PC-9 (cell line): ENCODE measurements at regions of chr3 and their contacts with region 1.

Region 1: GRCh38 chr3:122602011-122602710 is 24.7 kb downstream of the PARP15 start:
- DNase-seq: no peak
- H3K4me3 ChIP-seq: no peak overlapping the region
- H3K27ac ChIP-seq: no peak overlapping the region
- H3K4me1 ChIP-seq: no peaks in the 10 kb centered on the region
- H3K27me3 ChIP-seq: no peaks in the 10 kb centered on the region
- CTCF ChIP-seq: no peak

Region 2: GRCh38 chr3:120908030-120908794 is 1693.9 kb before region 1 on chr3 and contains the start of gene STXBP5L:
- CTCF ChIA-PET with region 1: no interaction called
- POLR2A ChIA-PET with region 1: no interaction called
- intact Hi-C with region 1: no loop called
- DNase-seq: peak in 1 of 2 experiments; percentile 47
- H3K4me3 ChIP-seq: no peak within 1 kb of the TSS
- H3K27ac ChIP-seq: no peak within 1 kb of the TSS
- H3K4me1 ChIP-seq: no peaks in the 10 kb centered on the region
- H3K27me3 ChIP-seq: no peaks in the 10 kb centered on the region
- CTCF ChIP-seq: no peak
- total RNA-seq, gene STXBP5L: not detected in 2 replicates

Region 3: DNA sequence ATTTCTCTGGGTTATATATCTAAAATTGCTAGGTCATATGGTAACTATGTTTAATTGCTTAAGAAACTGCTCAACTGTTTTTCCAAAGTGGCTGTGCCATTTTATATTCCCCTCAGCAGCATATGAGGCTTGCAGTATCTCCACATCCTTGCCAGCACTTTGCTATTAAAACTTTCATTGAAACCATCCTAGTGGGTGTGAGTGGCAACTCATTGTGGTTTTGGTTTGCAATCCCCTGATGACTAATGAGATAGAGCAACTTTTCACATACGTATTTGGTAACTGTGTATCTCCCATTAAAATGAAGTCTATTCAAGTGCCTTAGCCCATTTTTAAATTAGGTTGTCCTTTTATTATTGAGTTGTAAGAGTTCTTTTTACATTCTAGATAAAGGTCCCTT is 104.7 kb before region 1 on chr3:
- CTCF ChIA-PET with region 1: no interaction called
- POLR2A ChIA-PET with region 1: no interaction called
- intact Hi-C with region 1: no loop called
- DNase-seq: peak; percentile 25 to 79
- H3K4me3 ChIP-seq: no peak overlapping the region
- H3K27ac ChIP-seq: peak overlapping the region; percentile 75
- H3K4me1 ChIP-seq: peaks cover 25% of the 10 kb centered on the region
- H3K27me3 ChIP-seq: no peaks in the 10 kb centered on the region
- CTCF ChIP-seq: no peak

Region 4: DNA sequence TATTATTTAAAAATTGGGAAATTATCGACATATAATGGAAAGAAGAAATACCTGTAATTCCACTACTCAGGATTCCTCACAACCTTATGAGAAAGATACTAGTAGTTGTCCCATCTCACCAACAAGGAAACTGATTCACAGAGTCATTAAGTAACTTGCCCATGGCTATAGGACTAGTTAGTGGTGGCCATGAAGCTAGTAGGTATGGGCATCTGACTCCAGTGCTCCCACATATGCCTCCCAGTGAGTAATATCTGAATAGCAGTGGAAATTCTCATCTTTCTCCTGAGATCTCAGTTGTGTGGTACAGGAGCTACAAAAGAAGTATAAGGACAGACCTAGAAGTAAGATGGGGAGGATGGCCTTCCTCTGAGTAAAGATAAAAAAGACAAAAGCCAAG is 60.5 kb before region 1 on chr3:
- CTCF ChIA-PET with region 1: no interaction called
- POLR2A ChIA-PET with region 1: no interaction called
- intact Hi-C with region 1: no loop called
- DNase-seq: no peak
- H3K4me3 ChIP-seq: no peak overlapping the region
- H3K27ac ChIP-seq: no peak overlapping the region
- H3K4me1 ChIP-seq: no peaks in the 10 kb centered on the region
- H3K27me3 ChIP-seq: no peaks in the 10 kb centered on the region
- CTCF ChIP-seq: no peak

Region 5: DNA sequence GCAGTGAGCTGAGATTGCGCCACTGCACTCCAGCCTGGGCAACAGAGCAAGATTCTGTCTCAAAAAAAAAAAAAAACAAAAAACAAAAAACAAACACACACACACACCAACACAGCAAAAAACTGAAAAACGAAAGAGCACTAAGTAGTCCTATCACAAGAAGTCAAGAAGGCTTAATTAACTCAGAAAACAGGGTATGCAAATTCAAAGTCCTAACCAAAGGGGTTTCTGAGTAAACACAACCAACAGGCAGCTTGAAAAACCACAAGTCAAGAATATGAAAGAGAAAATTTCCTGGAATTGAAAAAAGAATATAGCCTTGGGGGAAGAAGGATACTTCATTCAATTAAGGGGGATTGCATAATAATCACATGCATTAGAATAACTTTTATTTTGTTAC is 40.8 kb after region 1 on chr3:
- CTCF ChIA-PET with region 1: no interaction called
- POLR2A ChIA-PET with region 1: interaction called, 12 read pairs
- intact Hi-C with region 1: no loop called
- DNase-seq: no peak
- H3K4me3 ChIP-seq: no peak overlapping the region
- H3K27ac ChIP-seq: no peak overlapping the region
- H3K4me1 ChIP-seq: no peaks in the 10 kb centered on the region
- H3K27me3 ChIP-seq: no peaks in the 10 kb centered on the region
- CTCF ChIP-seq: no peak